Natural killer cell (primary cell): ENCODE measurements at regions of chr2 and their contacts with region 1.

Region 1: GRCh38 chr2:71530641-71531332 is 77.4 kb downstream of the DYSF start:
- DNase-seq: peak in 1 of 2 donors; percentile 39
- ATAC-seq: peak in 1 of 3 donors; percentile 63
- H3K4me3 ChIP-seq: no peak overlapping the region
- H3K4me3 Mint-ChIP-seq: no peak overlapping the region
- H3K27ac ChIP-seq: no peak overlapping the region
- H3K27ac Mint-ChIP-seq: no peak overlapping the region
- H3K4me1 ChIP-seq: no peaks in the 10 kb centered on the region
- H3K4me1 Mint-ChIP-seq: no peaks in the 10 kb centered on the region
- H3K27me3 ChIP-seq: no peaks in the 10 kb centered on the region
- H3K27me3 Mint-ChIP-seq: peaks cover 14 to 33% of the 10 kb centered on the region in 2 donors
- CTCF ChIP-seq: peak; percentile 57

Region 2: DNA sequence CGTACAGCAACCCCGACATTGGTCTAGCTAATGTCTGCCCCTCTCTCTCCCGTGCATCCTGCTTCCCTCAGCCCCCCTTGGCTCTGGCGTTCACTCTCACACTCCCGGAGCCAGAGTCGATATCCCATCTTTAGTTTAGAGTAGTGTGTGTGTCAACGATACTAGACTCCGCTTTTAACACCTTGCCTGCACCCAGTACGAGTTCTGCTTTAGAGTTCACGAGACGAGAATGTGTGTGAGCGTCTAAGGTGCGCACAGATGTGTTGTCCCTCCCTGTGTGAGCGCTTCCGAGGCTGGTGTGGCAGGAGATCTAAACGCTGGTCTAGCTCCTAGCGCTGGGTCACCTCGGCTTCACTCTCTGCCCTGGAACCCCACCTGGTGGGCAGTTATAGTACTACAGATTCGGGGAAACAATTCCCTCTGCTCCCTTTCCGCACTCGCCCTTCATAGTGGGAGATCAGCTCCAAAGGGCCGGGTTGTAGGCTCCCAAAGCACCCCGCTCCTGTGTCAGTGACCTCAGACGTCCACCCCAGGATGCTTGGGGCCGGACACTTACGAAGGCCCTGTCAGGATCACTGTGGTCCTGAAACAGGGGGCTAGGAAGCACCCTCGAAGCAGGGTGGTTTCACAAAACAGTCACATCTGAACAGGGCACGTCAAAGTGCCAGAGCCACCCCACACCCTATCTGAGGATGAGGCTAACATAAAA is 619.5 kb after region 1 on chr2:
- intact Hi-C with region 1: loop called (anchors 5 kb)
- DNase-seq: peak; percentile 25 to 70
- ATAC-seq: peak; percentile 69 to 82 (median 74)
- H3K4me3 ChIP-seq: no peak overlapping the region
- H3K4me3 Mint-ChIP-seq: peak overlapping the region; percentile 90
- H3K27ac ChIP-seq: no peak overlapping the region
- H3K27ac Mint-ChIP-seq: no peak overlapping the region
- H3K4me1 ChIP-seq: peaks cover 35% of the 10 kb centered on the region
- H3K4me1 Mint-ChIP-seq: peaks cover 33 to 38% of the 10 kb centered on the region in 2 donors
- H3K27me3 ChIP-seq: peaks cover 33% of the 10 kb centered on the region
- H3K27me3 Mint-ChIP-seq: peaks cover 51 to 60% of the 10 kb centered on the region in 2 donors
- CTCF ChIP-seq: peak; percentile 56